HCT116 (cell line): ENCODE measurements at regions of chr5 and their contacts with region 1.

Region 1: DNA sequence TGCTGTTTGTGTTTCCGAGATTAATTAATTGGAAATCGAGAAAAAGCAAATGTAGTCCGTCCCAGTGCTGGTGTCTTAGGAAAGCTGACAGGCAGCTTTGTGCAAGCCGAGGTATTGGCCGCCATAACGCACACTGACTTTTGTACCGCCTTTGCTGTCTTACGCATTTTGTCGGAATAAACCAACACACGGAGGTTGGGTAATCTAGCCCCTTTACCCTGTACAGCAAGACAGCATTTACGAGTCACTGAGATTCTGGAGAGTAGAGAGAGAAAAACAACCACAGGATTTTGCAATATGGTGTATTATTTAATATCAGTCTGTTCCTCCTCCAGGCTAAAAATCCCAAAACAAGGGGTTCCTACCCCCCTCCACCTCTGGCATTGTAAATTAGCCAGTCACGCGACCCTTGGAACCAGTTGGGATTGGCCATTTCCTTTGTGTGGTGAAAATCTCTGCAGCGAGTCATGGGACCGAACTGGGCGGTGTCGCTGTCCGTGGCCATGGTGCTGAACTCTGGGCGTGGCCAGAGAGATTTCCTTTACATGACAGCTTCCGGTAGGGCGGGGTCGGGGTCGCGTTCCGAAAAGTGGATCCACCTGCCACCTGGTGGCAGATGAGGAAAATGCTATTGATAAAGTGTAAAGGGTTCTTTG is 10.3 kb upstream of the PCDHB1 start:
- DNase-seq: peak; percentile 93
- ATAC-seq: peak; percentile 84
- H3K4me3 ChIP-seq: peak overlapping the region; percentile 55 to 56
- H3K27ac ChIP-seq: 0 out of 2 replicates have a peak overlapping the region, but pooled peaks have one; percentile 8
- H3K4me1 ChIP-seq: peaks cover 2 to 10% of the 10 kb centered on the region in 2 experiments; a peak in 2 of 4 replicates
- H3K27me3 ChIP-seq: no peaks in the 10 kb centered on the region
- CTCF ChIP-seq: peak; percentile 67 to 94 (median 81)
- POLR2A ChIP-seq: no peak
- RAD21 ChIP-seq: peak; percentile 98

Region 2: DNA sequence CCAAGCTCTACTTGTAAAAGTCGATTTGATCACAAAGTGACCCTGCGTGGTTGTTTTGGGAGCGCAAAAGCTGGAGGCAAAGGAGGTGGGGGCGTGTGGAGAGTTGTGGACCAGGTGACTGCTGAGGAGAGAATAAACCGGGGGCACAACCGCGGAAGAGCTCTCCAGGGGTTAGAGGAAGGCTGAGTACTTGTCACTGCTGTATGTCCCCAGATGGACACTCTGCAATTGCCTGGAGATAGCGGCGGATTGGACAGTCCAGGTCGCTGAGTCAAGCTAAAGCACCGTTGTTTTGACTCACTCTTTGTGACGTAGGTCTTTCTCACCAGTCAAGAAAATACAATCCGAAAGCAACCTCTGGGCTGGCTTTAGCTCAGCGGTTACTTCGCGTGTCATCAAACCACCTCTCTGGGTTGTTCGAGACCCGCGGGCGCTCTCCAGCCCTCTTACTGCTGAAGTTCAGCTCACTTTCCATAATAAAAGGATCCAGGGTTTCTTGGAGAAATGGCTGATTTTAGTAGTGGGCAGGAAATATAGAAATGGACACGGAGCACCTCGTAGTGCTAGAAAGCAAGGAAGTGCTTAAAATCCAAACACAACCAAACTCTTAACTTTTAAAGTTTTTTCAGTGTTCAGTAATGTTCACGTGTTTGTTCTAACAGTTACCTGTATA is 315.0 kb before region 1 on chr5:
- CTCF ChIA-PET with region 1: no interaction called
- POLR2A ChIA-PET with region 1: no interaction called
- RAD21 ChIA-PET with region 1: no interaction called
- intact Hi-C with region 1: loop called (anchors 2 kb)
- DNase-seq: peak; percentile 96
- ATAC-seq: peak; percentile 92
- H3K4me3 ChIP-seq: peak overlapping the region; percentile 22 to 45
- H3K27ac ChIP-seq: no peak overlapping the region
- H3K4me1 ChIP-seq: peaks cover 4 to 18% of the 10 kb centered on the region in 2 experiments; a peak in 3 of 4 replicates
- H3K27me3 ChIP-seq: no peaks in the 10 kb centered on the region
- CTCF ChIP-seq: no peak
- POLR2A ChIP-seq: no peak
- RAD21 ChIP-seq: no peak

Region 3: GRCh38 chr5:140855772-140856674 is 184.9 kb before region 1 on chr5 and contains the start of gene PCDHA10:
- CTCF ChIA-PET with region 1: interaction called, 9 read pairs
- POLR2A ChIA-PET with region 1: no interaction called
- RAD21 ChIA-PET with region 1: no interaction called
- intact Hi-C with region 1: loop called (anchors 1 kb)
- DNase-seq: peak; percentile 42
- ATAC-seq: no peak
- H3K4me3 ChIP-seq: no peak within 1 kb of the TSS
- H3K27ac ChIP-seq: no peak within 1 kb of the TSS
- H3K4me1 ChIP-seq: no peaks in the 10 kb centered on the region
- H3K27me3 ChIP-seq: no peaks in the 10 kb centered on the region
- CTCF ChIP-seq: peak; percentile 29 to 52 (median 43); a peak in 3 of 6 replicates
- POLR2A ChIP-seq: no peak
- RAD21 ChIP-seq: peak; percentile 68
- total RNA-seq, gene PCDHA10: 0.05 TPM

Region 4: GRCh38 chr5:140875066-140876065 is 165.5 kb before region 1 on chr5 and contains the start of gene PCDHA12:
- CTCF ChIA-PET with region 1: interaction called, 21 read pairs
- POLR2A ChIA-PET with region 1: no interaction called
- RAD21 ChIA-PET with region 1: no interaction called
- intact Hi-C with region 1: no loop called
- DNase-seq: no peak
- ATAC-seq: no peak
- H3K4me3 ChIP-seq: no peak within 1 kb of the TSS
- H3K27ac ChIP-seq: no peak within 1 kb of the TSS
- H3K4me1 ChIP-seq: no peaks in the 10 kb centered on the region
- H3K27me3 ChIP-seq: no peaks in the 10 kb centered on the region
- CTCF ChIP-seq: peak; percentile 16 to 33 (median 27); a peak in 4 of 6 replicates
- POLR2A ChIP-seq: no peak
- RAD21 ChIP-seq: peak; percentile 37; the same call in 1 of the 2 replicates
- total RNA-seq, gene PCDHA12: not detected

Region 5: DNA sequence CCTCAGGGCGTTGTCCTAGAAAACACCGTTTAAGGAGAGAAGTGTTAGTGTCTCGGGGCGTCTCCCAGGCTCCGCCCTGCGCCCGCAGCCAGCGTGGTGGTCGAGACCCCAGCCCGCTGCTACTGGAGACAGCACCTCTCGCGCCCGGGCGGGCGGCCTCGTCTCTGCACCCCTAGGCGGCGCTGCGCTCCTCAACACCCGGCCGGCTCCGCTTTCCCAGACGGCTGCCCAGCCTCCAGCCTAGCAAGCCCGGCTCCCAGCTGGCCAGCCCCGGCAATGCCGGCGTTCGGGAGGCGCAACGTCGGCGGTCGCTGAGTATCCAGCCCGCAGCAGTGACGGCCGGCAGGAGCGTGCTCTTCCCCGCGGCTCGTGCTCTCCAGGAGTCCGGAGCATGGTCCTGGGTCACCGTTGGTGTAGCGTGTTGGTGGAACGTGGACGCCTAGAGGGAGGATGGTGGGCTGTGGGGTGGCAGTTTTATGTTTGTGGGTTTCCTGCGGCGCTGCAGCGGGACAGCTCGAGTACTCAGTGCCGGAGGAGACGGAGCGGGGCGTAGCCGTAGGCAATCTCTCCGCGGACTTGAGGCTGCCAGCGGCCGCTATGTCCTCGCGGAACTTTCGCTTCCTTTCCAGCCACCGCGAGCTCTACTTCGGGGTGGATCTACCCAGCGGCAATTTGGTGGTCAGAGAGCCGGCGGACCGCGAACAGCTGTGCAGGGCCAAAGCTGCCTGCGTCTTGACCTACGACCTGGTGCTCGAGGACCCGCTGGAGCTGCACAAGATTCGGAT is 114.3 kb before region 1 on chr5:
- CTCF ChIA-PET with region 1: interaction called, 50 read pairs
- POLR2A ChIA-PET with region 1: interaction called, 4 read pairs
- RAD21 ChIA-PET with region 1: interaction called, 14 to 24 read pairs
- intact Hi-C with region 1: loop called (anchors 1 kb)
- DNase-seq: peak; percentile 68
- ATAC-seq: peak; percentile 97
- H3K4me3 ChIP-seq: peak overlapping the region; percentile 37 to 58
- H3K27ac ChIP-seq: peak overlapping the region; percentile 23; the same call in 1 of the 2 replicates
- H3K4me1 ChIP-seq: peaks cover 2 to 15% of the 10 kb centered on the region in 2 experiments; a peak in 3 of 4 replicates
- H3K27me3 ChIP-seq: no peaks in the 10 kb centered on the region
- CTCF ChIP-seq: peak; percentile 76 to 90 (median 80)
- POLR2A ChIP-seq: no peak
- RAD21 ChIP-seq: peak; percentile 91

Region 6: DNA sequence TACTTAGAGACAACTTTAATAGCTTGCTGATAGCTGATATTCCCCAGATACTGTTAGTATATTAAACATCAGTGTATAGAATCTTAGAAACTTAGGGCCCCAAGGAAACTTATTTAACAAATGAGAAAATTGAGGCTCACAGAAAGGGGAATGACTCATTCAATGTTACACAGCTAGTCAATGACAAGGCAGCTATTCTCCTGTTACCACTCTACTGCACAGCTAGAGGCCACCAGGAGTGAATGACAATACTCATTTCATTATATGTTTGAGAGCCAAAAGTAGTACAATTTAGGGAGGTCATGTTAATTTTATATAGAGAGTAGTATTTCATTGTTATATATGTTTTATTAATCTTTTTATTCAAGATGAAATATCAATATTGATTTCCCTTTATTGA is 23.0 kb before region 1 on chr5:
- CTCF ChIA-PET with region 1: interaction called, 3 read pairs
- POLR2A ChIA-PET with region 1: interaction called, 10 read pairs
- RAD21 ChIA-PET with region 1: interaction called in 1 of 2 experiments, 3 read pairs
- intact Hi-C with region 1: no loop called
- DNase-seq: no peak
- ATAC-seq: no peak; the same call in 1 of the 2 replicates
- H3K4me3 ChIP-seq: no peak overlapping the region
- H3K27ac ChIP-seq: no peak overlapping the region
- H3K4me1 ChIP-seq: no peaks in the 10 kb centered on the region
- H3K27me3 ChIP-seq: no peaks in the 10 kb centered on the region
- CTCF ChIP-seq: no peak
- POLR2A ChIP-seq: no peak
- RAD21 ChIP-seq: no peak